Ovary (tissue), 10 donors: ENCODE measurements at regions of chr13 and their contacts with region 1.

Region 1: GRCh38 chr13:60356970-60357369 is 40.0 kb upstream of the TDRD3 start:
- DNase-seq: no peak
- H3K4me3 ChIP-seq: no peak overlapping the region
- H3K27ac ChIP-seq: no peak overlapping the region
- H3K4me1 ChIP-seq: no peaks in the 10 kb centered on the region
- H3K27me3 ChIP-seq: no peaks in the 10 kb centered on the region
- CTCF ChIP-seq: no peak
- EP300 ChIP-seq: no peak
- POLR2A ChIP-seq: no peak

Region 2: DNA sequence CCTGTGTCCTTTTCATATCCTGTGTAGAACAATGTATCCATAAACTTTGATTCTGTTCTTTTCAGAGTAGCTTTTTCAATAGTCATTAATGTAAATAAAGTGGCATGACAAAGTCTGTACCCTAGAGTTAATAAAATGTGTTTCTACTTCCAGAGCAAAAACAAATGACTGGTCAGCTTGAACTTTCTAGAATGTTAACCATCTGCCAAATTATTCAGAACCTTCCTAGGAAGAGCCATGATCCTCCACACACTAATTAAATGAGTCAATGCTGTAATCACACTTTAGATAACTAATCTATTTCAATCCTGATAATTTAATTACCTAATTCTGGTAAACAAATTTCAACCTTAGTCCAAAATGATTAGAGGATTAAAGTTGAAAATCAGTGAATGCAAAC is 266.4 kb before region 1 on chr13:
- intact Hi-C with region 1: no loop called
- DNase-seq: no peak
- H3K4me3 ChIP-seq: no peak overlapping the region
- H3K27ac ChIP-seq: no peak overlapping the region
- H3K4me1 ChIP-seq: no peaks in the 10 kb centered on the region
- H3K27me3 ChIP-seq: no peaks in the 10 kb centered on the region
- CTCF ChIP-seq: no peak
- EP300 ChIP-seq: no peak
- POLR2A ChIP-seq: no peak

Region 3: GRCh38 chr13:60407095-60407494 is 50.1 kb after region 1 on chr13:
- intact Hi-C with region 1: loop called in 1 of 4 experiments (anchors 5 kb)
- DNase-seq: no peak
- H3K4me3 ChIP-seq: no peak overlapping the region
- H3K27ac ChIP-seq: no peak overlapping the region
- H3K4me1 ChIP-seq: peaks cover 5% of the 10 kb centered on the region
- H3K27me3 ChIP-seq: no peaks in the 10 kb centered on the region
- CTCF ChIP-seq: no peak
- EP300 ChIP-seq: no peak
- POLR2A ChIP-seq: no peak

Region 4: DNA sequence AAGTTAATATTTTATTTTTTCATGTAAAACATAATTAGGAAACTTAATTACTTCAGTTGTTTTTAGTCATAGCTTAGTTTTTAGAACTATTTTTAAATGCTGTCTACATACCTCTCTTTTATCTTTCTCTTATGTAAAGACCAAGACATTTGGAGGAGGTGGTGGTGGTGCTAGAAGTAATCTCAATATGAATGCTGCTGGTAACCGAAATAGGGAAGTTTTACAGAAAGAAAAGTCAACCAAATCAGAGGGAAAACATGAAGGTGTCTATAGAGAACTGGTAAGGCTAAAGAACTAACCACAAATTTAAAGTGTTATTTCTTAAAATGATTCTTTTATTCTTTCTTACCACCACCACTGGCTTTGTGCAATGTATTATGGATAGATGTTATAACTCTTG is 137.3 kb after region 1 on chr13:
- intact Hi-C with region 1: no loop called
- DNase-seq: no peak
- H3K4me3 ChIP-seq: no peak overlapping the region
- H3K27ac ChIP-seq: no peak overlapping the region
- H3K4me1 ChIP-seq: no peaks in the 10 kb centered on the region
- H3K27me3 ChIP-seq: no peaks in the 10 kb centered on the region
- CTCF ChIP-seq: no peak
- EP300 ChIP-seq: no peak
- POLR2A ChIP-seq: no peak